Transverse colon (tissue), 4 donors: ENCODE measurements at regions of chr12 and their contacts with region 1.

Region 1: DNA sequence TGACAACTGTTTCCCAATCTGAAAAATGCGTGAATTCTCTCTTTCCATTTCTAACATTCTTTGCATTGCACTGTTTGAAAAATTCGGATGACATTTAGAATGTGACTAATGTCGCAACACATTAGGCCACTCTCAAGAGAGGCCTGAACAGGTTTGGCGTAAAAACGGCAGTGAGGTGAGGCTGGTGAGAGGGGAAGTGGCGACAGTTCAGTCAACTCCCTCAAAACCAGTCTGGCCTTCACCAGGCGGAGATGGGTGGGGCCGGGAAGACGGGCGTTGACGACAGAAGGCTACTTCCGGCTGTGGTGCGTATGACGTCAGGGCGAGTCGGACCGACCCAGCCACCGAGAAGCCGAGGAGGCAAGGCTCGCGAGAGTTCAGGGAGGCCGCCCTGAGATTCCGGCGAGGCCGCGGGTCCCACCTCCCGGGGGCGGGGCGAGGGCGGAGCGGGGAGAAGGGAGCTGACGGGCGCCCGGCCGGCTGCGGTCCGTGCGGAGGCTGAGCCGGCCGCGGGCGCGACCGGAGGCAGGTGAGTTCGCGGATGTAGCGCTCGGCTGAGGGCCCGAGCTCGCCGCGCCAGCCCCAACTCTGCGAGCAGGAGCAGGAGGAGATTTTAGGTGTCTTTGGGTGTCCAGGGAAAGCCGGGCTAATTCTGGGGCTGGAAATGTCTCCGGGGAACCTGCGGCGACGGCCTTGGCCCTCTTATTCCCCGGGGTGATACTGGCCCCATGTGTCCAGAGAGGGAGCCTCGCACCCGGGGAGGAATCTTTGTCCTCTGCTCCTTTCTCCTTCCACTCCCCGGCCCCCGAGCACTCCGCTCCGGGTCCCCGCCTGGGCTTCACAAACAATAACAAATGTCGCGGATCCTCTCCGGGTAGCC is at the start of gene STK38L:
- DNase-seq: peak; percentile 99
- H3K4me3 ChIP-seq: peak within 1 kb of the TSS; percentile 69 to 82 (median 74)
- H3K27ac ChIP-seq: peak within 1 kb of the TSS; percentile 91 to 94 (median 92)
- H3K4me1 ChIP-seq: peaks cover 4 to 36% (median 14%) of the 10 kb centered on the region in 4 donors
- H3K27me3 ChIP-seq: no peaks in the 10 kb centered on the region
- CTCF ChIP-seq: no peak
- EP300 ChIP-seq: no peak
- POLR2A ChIP-seq: peak; percentile 93
- total RNA-seq, gene STK38L: 18.5 to 51.8 (median 40.9) TPM

Region 2: GRCh38 chr12:27024291-27024690 is 219.8 kb before region 1 on chr12:
- in situ Hi-C with region 1: loop called in 1 of 4 experiments (anchors 10 kb)
- intact Hi-C with region 1: no loop called
- DNase-seq: no peak
- H3K4me3 ChIP-seq: no peak overlapping the region
- H3K27ac ChIP-seq: no peak overlapping the region
- H3K4me1 ChIP-seq: peaks cover 9 to 25% (median 19%) of the 10 kb centered on the region in 4 donors
- H3K27me3 ChIP-seq: no peaks in the 10 kb centered on the region
- CTCF ChIP-seq: no peak
- EP300 ChIP-seq: no peak
- POLR2A ChIP-seq: no peak

Region 3: DNA sequence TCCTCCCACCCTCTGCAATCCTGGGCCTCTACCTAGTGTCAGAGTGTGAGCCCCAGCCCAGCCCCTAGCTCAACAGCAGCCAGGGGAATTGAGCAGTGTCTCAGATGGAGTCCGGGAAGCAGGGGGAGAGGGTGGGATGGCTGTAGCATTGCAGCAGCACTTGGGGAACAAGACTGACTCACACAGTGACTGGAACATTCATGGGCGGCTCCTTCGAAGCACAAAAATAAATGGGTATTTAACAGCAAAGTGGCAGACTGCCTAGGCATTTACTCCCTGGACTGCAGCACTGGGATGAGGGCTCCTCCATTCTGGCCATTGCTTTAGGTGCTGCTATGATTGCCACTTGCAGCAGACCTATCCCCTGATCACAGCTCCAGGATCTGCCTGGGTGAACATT is 46.0 kb before region 1 on chr12:
- in situ Hi-C with region 1: no loop called
- intact Hi-C with region 1: loop called (anchors 5 kb)
- DNase-seq: no peak
- H3K4me3 ChIP-seq: no peak overlapping the region
- H3K27ac ChIP-seq: peak overlapping the region; percentile 9 to 82 (median 66)
- H3K4me1 ChIP-seq: peaks cover 0 to 10% (median 3%) of the 10 kb centered on the region in 4 donors
- H3K27me3 ChIP-seq: no peaks in the 10 kb centered on the region
- CTCF ChIP-seq: no peak
- EP300 ChIP-seq: no peak
- POLR2A ChIP-seq: no peak